Calu3 (cell line): ENCODE measurements at regions of chr4 and their contacts with region 1.

Region 1: GRCh38 chr4:24753500-24753899 is 41.9 kb upstream of the SOD3 start:
- DNase-seq: peak; percentile 52
- H3K4me3 Mint-ChIP-seq: no peak overlapping the region
- H3K27ac Mint-ChIP-seq: peak overlapping the region; percentile 51
- H3K4me1 Mint-ChIP-seq: peaks cover 21% of the 10 kb centered on the region
- H3K27me3 Mint-ChIP-seq: no peaks in the 10 kb centered on the region
- CTCF ChIP-seq: no peak

Region 2: GRCh38 chr4:24529555-24529954 is 223.9 kb before region 1 on chr4:
- CTCF ChIA-PET with region 1: no interaction called
- intact Hi-C with region 1: no loop called
- DNase-seq: no peak
- H3K4me3 Mint-ChIP-seq: no peak overlapping the region
- H3K27ac Mint-ChIP-seq: no peak overlapping the region
- H3K4me1 Mint-ChIP-seq: no peaks in the 10 kb centered on the region
- H3K27me3 Mint-ChIP-seq: no peaks in the 10 kb centered on the region
- CTCF ChIP-seq: no peak

Region 3: DNA sequence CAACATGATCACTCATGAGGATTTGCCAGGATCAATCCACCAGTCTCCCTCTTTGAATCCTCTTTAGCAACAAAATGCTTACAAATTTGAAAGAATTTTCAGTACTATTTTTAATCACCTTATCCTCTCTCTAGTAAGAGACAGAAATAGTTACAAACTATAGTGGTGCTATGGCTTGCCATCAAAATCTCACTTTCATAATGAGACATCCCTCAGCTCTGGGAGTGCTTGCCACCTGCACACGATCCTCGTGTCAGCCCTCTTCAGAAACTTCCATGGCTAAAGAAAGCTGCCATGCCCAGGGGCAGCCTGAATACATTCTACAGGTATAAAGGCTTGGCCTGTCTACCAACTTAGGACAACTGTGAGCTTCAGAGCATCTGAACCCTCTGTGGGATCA is 164.1 kb before region 1 on chr4:
- CTCF ChIA-PET with region 1: no interaction called
- intact Hi-C with region 1: no loop called
- DNase-seq: no peak
- H3K4me3 Mint-ChIP-seq: no peak overlapping the region
- H3K27ac Mint-ChIP-seq: no peak overlapping the region
- H3K4me1 Mint-ChIP-seq: no peaks in the 10 kb centered on the region
- H3K27me3 Mint-ChIP-seq: no peaks in the 10 kb centered on the region
- CTCF ChIP-seq: no peak

Region 4: GRCh38 chr4:24965627-24966026 is 212.1 kb after region 1 on chr4:
- CTCF ChIA-PET with region 1: no interaction called
- intact Hi-C with region 1: no loop called
- DNase-seq: no peak
- H3K4me3 Mint-ChIP-seq: no peak overlapping the region
- H3K27ac Mint-ChIP-seq: no peak overlapping the region
- H3K4me1 Mint-ChIP-seq: no peaks in the 10 kb centered on the region
- H3K27me3 Mint-ChIP-seq: no peaks in the 10 kb centered on the region
- CTCF ChIP-seq: no peak

Region 5: GRCh38 chr4:25051534-25051933 is 298.0 kb after region 1 on chr4:
- CTCF ChIA-PET with region 1: no interaction called
- intact Hi-C with region 1: no loop called
- DNase-seq: no peak
- H3K4me3 Mint-ChIP-seq: no peak overlapping the region
- H3K27ac Mint-ChIP-seq: no peak overlapping the region
- H3K4me1 Mint-ChIP-seq: no peaks in the 10 kb centered on the region
- H3K27me3 Mint-ChIP-seq: peaks cover 15% of the 10 kb centered on the region
- CTCF ChIP-seq: no peak

Region 6: DNA sequence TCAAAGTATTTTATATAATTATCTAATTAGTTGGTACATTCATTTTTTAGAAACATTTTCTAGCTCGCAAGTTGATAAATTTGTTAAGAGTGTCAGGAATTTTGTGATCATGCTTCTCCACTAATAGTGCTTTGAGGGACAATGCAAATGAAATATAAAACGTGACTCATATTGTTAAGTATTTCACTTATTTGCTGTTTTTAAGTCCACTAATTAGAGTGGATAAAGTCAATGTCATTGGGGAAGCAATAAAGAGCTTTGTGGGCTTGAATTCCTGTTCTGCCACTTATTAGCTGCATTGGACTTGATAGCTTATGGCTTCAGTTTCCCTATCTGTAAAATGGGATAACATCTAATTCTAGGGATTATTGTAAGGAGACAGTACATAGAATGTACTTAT is 597.1 kb after region 1 on chr4:
- CTCF ChIA-PET with region 1: interaction called, 10 read pairs
- intact Hi-C with region 1: no loop called
- DNase-seq: no peak
- H3K4me3 Mint-ChIP-seq: no peak overlapping the region
- H3K27ac Mint-ChIP-seq: no peak overlapping the region
- H3K4me1 Mint-ChIP-seq: no peaks in the 10 kb centered on the region
- H3K27me3 Mint-ChIP-seq: no peaks in the 10 kb centered on the region
- CTCF ChIP-seq: no peak